Natural killer cell (primary cell): ENCODE measurements at regions of chr7 and their contacts with region 1.

Region 1: GRCh38 chr7:139777948-139778841 is at the start of gene HIPK2:
- DNase-seq: peak; percentile 63 to 81
- ATAC-seq: peak; percentile 68 to 80 (median 74)
- H3K4me3 ChIP-seq: peak within 1 kb of the TSS; percentile 78
- H3K4me3 Mint-ChIP-seq: peak within 1 kb of the TSS; percentile 98
- H3K27ac ChIP-seq: peak within 1 kb of the TSS; percentile 75
- H3K27ac Mint-ChIP-seq: peak within 1 kb of the TSS; percentile 95 to 99
- H3K4me1 ChIP-seq: peaks cover 21% of the 10 kb centered on the region
- H3K4me1 Mint-ChIP-seq: peaks cover 57 to 59% of the 10 kb centered on the region in 2 donors
- H3K27me3 ChIP-seq: peaks cover 4% of the 10 kb centered on the region
- H3K27me3 Mint-ChIP-seq: no peaks in the 10 kb centered on the region
- CTCF ChIP-seq: no peak
- total RNA-seq, gene HIPK2: 127 to 145 (median 144) TPM

Region 2: DNA sequence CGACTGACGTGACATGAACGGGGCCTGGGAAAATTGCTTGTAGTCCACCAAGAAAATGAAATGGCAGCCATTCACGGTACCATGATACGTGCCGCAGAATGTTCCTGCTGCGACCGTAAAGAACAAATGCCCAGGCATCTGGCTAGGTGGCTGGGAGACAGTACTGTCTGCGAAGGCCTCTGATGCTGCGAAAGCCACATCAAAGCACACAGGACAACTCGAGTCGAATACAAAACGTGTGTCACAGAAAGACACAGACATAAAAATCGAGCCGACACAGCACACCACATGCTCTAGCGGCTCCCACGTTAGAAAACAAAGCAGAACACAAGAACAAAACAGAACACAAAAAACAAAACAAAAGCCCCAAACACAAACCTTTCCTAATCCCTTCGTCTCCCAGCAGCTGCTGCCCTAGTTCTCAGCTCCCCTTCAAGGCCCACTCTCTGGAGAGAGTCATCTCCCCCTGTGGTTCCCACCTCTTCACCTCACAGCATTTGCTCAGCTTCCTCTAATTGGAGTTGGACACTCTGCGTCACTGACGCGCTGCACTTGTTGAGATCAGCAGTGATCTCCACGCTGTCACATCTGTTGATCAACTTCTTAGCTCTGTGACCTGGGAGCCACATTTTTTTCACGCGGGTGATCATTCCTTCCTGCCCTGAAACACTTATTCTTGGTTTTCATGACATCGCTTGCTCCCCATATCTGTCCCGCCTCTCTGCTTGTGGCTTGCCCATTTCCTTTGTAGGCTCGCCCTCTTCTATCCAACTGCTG is 142.5 kb before region 1 on chr7:
- intact Hi-C with region 1: loop called (anchors 2 kb)
- DNase-seq: peak; percentile 78 to 85
- ATAC-seq: peak; percentile 93 to 96 (median 94)
- H3K4me3 ChIP-seq: no peak overlapping the region
- H3K4me3 Mint-ChIP-seq: peak overlapping the region; percentile 79
- H3K27ac ChIP-seq: peak overlapping the region; percentile 88
- H3K27ac Mint-ChIP-seq: peak overlapping the region; percentile 91 to 96
- H3K4me1 ChIP-seq: peaks cover 28% of the 10 kb centered on the region
- H3K4me1 Mint-ChIP-seq: peaks cover 45 to 58% of the 10 kb centered on the region in 2 donors
- H3K27me3 ChIP-seq: no peaks in the 10 kb centered on the region
- H3K27me3 Mint-ChIP-seq: no peaks in the 10 kb centered on the region
- CTCF ChIP-seq: no peak

Region 3: GRCh38 chr7:139714163-139714901 is 63.9 kb before region 1 on chr7:
- intact Hi-C with region 1: no loop called
- DNase-seq: no peak
- ATAC-seq: no peak
- H3K4me3 ChIP-seq: no peak overlapping the region
- H3K4me3 Mint-ChIP-seq: no peak overlapping the region
- H3K27ac ChIP-seq: peak overlapping the region; percentile 51
- H3K27ac Mint-ChIP-seq: peak overlapping the region in 1 of 2 donors; percentile 68
- H3K4me1 ChIP-seq: peaks cover 11% of the 10 kb centered on the region
- H3K4me1 Mint-ChIP-seq: peaks cover 42 to 47% of the 10 kb centered on the region in 2 donors
- H3K27me3 ChIP-seq: no peaks in the 10 kb centered on the region
- H3K27me3 Mint-ChIP-seq: no peaks in the 10 kb centered on the region
- CTCF ChIP-seq: no peak

Region 4: GRCh38 chr7:139875821-139876241 is 97.6 kb after region 1 on chr7:
- intact Hi-C with region 1: loop called (anchors 2 kb)
- DNase-seq: peak in 1 of 2 donors; percentile 56
- ATAC-seq: peak; percentile 66 to 80 (median 79)
- H3K4me3 ChIP-seq: no peak overlapping the region
- H3K4me3 Mint-ChIP-seq: peak overlapping the region; percentile 74
- H3K27ac ChIP-seq: peak overlapping the region; percentile 88
- H3K27ac Mint-ChIP-seq: peak overlapping the region; percentile 83
- H3K4me1 ChIP-seq: peaks cover 48% of the 10 kb centered on the region
- H3K4me1 Mint-ChIP-seq: peaks cover 73 to 81% of the 10 kb centered on the region in 2 donors
- H3K27me3 ChIP-seq: no peaks in the 10 kb centered on the region
- H3K27me3 Mint-ChIP-seq: no peaks in the 10 kb centered on the region
- CTCF ChIP-seq: no peak

Region 5: DNA sequence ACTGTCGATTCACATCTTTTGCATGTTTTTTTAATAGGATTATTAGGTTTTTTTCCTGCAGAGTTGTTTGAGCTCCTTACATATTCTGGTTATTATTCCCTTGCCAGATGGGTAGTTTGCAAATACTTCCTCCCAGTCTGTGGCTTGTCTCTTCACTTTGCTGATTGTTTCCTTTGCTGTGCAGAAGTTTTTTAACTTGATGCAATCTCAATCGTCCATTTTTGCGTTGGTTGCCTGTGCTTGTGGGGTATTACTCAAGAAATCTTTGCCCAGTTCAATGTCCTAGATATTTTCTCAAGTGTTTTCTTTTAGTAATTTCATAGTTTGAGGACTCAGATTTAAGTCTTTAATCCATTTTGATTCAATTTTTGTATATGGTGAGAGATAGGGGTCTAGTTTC is 146.3 kb after region 1 on chr7:
- intact Hi-C with region 1: loop called (anchors 5 kb)
- DNase-seq: no peak
- ATAC-seq: no peak
- H3K4me3 ChIP-seq: no peak overlapping the region
- H3K4me3 Mint-ChIP-seq: no peak overlapping the region
- H3K27ac ChIP-seq: no peak overlapping the region
- H3K27ac Mint-ChIP-seq: peak overlapping the region; percentile 19 to 45
- H3K4me1 ChIP-seq: peaks cover 13% of the 10 kb centered on the region
- H3K4me1 Mint-ChIP-seq: peaks cover 52 to 65% of the 10 kb centered on the region in 2 donors
- H3K27me3 ChIP-seq: no peaks in the 10 kb centered on the region
- H3K27me3 Mint-ChIP-seq: no peaks in the 10 kb centered on the region
- CTCF ChIP-seq: no peak

Region 6: DNA sequence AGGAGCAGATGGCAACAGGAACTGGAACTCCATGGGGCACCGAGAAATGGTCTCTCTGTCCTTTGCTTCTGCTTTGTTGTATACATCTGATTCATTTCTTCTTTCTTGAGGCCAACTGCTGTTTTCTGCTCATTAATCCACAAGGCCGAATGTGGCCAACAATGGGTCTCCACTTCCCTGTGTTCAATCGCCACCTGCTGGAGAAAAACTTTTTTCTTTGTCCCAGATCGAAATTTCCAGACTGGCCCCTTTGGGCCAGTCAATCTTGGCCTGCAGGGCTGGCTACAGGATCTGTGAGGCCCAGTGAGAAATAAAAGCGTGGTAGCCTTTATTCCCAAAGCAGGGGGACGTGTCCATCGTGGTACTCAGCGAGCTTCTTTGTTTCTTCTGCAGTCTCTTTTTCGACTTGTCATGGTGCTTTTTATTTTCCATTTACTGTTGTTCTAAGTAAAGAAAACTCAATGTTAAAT is 225.8 kb after region 1 on chr7:
- intact Hi-C with region 1: loop called (anchors 1 kb)
- DNase-seq: peak in 1 of 2 donors; percentile 60
- ATAC-seq: peak in 2 of 3 donors; percentile 26 to 41
- H3K4me3 ChIP-seq: no peak overlapping the region
- H3K4me3 Mint-ChIP-seq: no peak overlapping the region
- H3K27ac ChIP-seq: no peak overlapping the region
- H3K27ac Mint-ChIP-seq: peak overlapping the region in 1 of 2 donors; percentile 24
- H3K4me1 ChIP-seq: no peaks in the 10 kb centered on the region
- H3K4me1 Mint-ChIP-seq: peaks cover 6% of the 10 kb centered on the region in 2 donors
- H3K27me3 ChIP-seq: no peaks in the 10 kb centered on the region
- H3K27me3 Mint-ChIP-seq: no peaks in the 10 kb centered on the region
- CTCF ChIP-seq: peak; percentile 61

Region 7: GRCh38 chr7:140653319-140654108 is 875.3 kb after region 1 on chr7:
- intact Hi-C with region 1: no loop called
- DNase-seq: peak in 1 of 2 donors; percentile 72
- ATAC-seq: peak in 2 of 3 donors; percentile 51 to 54
- H3K4me3 ChIP-seq: no peak overlapping the region
- H3K4me3 Mint-ChIP-seq: no peak overlapping the region
- H3K27ac ChIP-seq: no peak overlapping the region
- H3K27ac Mint-ChIP-seq: no peak overlapping the region
- H3K4me1 ChIP-seq: peaks cover 14% of the 10 kb centered on the region
- H3K4me1 Mint-ChIP-seq: peaks cover 25 to 30% of the 10 kb centered on the region in 2 donors
- H3K27me3 ChIP-seq: no peaks in the 10 kb centered on the region
- H3K27me3 Mint-ChIP-seq: peaks cover 0 to 14% of the 10 kb centered on the region in 2 donors
- CTCF ChIP-seq: peak; percentile 90